ENCODE measurements at regions of chr7 and their contacts with region 1.

Region 1: GRCh38 chr7:7653593-7654187 is 13.1 kb downstream of the UMAD1 start:
- DNase-seq: no peak
- H3K4me3 Mint-ChIP-seq: no peak overlapping the region
- H3K27ac Mint-ChIP-seq: no peak overlapping the region
- H3K4me1 Mint-ChIP-seq: peaks cover 26% of the 10 kb centered on the region
- H3K27me3 Mint-ChIP-seq: peaks cover 4% of the 10 kb centered on the region

Region 2: DNA sequence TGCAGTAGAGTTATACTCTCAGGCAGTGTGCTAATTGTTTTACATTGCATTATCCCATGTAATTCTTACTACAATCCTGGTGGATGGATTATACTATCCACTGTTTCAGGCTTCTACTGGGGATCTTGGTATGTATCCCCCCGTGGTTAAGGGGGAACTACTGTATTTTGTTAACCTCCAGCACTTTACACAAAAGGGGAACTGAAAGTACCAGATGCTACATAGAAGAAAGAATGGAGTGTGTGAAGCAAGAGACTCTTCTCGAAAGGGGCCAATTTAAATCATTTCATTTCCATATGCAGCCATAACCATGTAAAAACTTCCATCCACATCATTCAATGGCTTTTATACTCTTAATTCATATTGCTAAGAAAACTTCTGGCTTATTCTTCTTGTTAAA is 401.9 kb before region 1 on chr7:
- intact Hi-C with region 1: no loop called
- DNase-seq: no peak
- H3K4me3 Mint-ChIP-seq: no peak overlapping the region
- H3K27ac Mint-ChIP-seq: no peak overlapping the region
- H3K4me1 Mint-ChIP-seq: peaks cover 28% of the 10 kb centered on the region
- H3K27me3 Mint-ChIP-seq: no peaks in the 10 kb centered on the region

Region 3: GRCh38 chr7:7672545-7673239 is 19.0 kb after region 1 on chr7:
- intact Hi-C with region 1: loop called (anchors 2 kb)
- DNase-seq: no peak
- H3K4me3 Mint-ChIP-seq: peak overlapping the region; percentile 46
- H3K27ac Mint-ChIP-seq: peak overlapping the region; percentile 64
- H3K4me1 Mint-ChIP-seq: peaks cover 28% of the 10 kb centered on the region
- H3K27me3 Mint-ChIP-seq: no peaks in the 10 kb centered on the region